ENCODE measurements at regions of chr7 and their contacts with region 1.

Region 1: GRCh38 chr7:39285256-39285655 is 280.9 kb upstream of the YAE1 start:
- DNase-seq: no peak
- H3K4me3 Mint-ChIP-seq: no peak overlapping the region
- H3K27ac Mint-ChIP-seq: no peak overlapping the region
- H3K4me1 Mint-ChIP-seq: no peaks in the 10 kb centered on the region
- H3K27me3 Mint-ChIP-seq: peaks cover 84% of the 10 kb centered on the region
- CTCF ChIP-seq: no peak

Region 2: GRCh38 chr7:39336442-39336841 is 51.2 kb after region 1 on chr7:
- CTCF ChIA-PET with region 1: no interaction called
- intact Hi-C with region 1: loop called (anchors 5 kb)
- DNase-seq: no peak
- H3K4me3 Mint-ChIP-seq: no peak overlapping the region
- H3K27ac Mint-ChIP-seq: no peak overlapping the region
- H3K4me1 Mint-ChIP-seq: peaks cover 6% of the 10 kb centered on the region
- H3K27me3 Mint-ChIP-seq: peaks cover 38% of the 10 kb centered on the region
- CTCF ChIP-seq: no peak

Region 3: GRCh38 chr7:39349452-39350123 is 64.3 kb after region 1 on chr7:
- CTCF ChIA-PET with region 1: no interaction called
- intact Hi-C with region 1: no loop called
- DNase-seq: no peak
- H3K4me3 Mint-ChIP-seq: no peak overlapping the region
- H3K27ac Mint-ChIP-seq: no peak overlapping the region
- H3K4me1 Mint-ChIP-seq: peaks cover 24% of the 10 kb centered on the region
- H3K27me3 Mint-ChIP-seq: no peaks in the 10 kb centered on the region
- CTCF ChIP-seq: no peak

Measured in Calu3 (cell line).